K562 (cell line): ENCODE measurements at regions of chr2 and their contacts with region 1.

Region 1: DNA sequence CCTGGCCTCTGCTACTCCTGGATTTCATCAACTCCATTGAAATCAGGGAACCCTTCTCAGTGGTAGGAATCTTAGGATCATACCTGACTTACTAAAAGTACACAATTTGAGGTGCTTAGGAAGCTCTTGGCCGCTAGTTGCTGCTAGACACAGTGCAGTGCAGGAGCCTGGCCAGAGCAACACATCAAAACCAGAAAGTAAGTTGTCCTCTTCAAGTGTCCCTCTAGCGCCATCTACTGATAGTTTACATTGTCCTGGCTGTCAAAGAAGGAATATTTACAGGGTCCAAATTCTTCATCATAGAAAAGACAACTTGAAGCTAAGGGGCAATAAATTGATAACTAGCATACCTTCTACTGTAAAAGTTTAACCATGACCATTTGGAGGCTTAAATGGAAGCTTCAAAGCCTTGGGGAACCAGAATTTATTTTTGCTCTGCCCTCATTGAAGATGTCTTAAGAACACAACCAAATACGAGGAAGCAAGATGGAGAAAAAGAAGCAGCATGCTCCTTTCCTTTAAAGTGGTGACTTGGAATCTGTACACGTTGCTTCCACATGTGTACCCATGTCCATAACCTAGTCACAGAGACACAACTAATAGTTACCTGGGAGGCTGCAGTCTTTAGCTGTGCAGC is 889.1 kb upstream of the GCFC2 start:
- DNase-seq: peak; percentile 38 to 74 (median 45)
- ATAC-seq: peak; percentile 90
- H3K4me3 ChIP-seq: no peak overlapping the region
- H3K27ac ChIP-seq: no peak overlapping the region
- H3K4me1 ChIP-seq: no peaks in the 10 kb centered on the region
- H3K27me3 ChIP-seq: no peaks in the 10 kb centered on the region
- CTCF ChIP-seq: peak; percentile 68 to 84 (median 81)
- EP300 ChIP-seq: no peak
- POLR2A ChIP-seq: no peak
- RAD21 ChIP-seq: peak; percentile 64 to 78

Region 2: GRCh38 chr2:75640621-75641121 is 959.2 kb before region 1 on chr2:
- CTCF ChIA-PET with region 1: no interaction called
- POLR2A ChIA-PET with region 1: no interaction called
- in situ Hi-C with region 1: loop called (anchors 25 kb)
- intact Hi-C with region 1: loop called (anchors 5 kb)
- DNase-seq: peak; percentile 65 to 69 (median 66)
- ATAC-seq: peak; percentile 99
- H3K4me3 ChIP-seq: no peak overlapping the region
- H3K27ac ChIP-seq: no peak overlapping the region
- H3K4me1 ChIP-seq: no peaks in the 10 kb centered on the region
- H3K27me3 ChIP-seq: peaks cover 2 to 5% of the 10 kb centered on the region in 2 experiments; a peak in 2 of 5 replicates
- CTCF ChIP-seq: peak; percentile 94 to 98 (median 97)
- EP300 ChIP-seq: no peak
- POLR2A ChIP-seq: no peak
- RAD21 ChIP-seq: peak; percentile 88 to 94

Region 3: DNA sequence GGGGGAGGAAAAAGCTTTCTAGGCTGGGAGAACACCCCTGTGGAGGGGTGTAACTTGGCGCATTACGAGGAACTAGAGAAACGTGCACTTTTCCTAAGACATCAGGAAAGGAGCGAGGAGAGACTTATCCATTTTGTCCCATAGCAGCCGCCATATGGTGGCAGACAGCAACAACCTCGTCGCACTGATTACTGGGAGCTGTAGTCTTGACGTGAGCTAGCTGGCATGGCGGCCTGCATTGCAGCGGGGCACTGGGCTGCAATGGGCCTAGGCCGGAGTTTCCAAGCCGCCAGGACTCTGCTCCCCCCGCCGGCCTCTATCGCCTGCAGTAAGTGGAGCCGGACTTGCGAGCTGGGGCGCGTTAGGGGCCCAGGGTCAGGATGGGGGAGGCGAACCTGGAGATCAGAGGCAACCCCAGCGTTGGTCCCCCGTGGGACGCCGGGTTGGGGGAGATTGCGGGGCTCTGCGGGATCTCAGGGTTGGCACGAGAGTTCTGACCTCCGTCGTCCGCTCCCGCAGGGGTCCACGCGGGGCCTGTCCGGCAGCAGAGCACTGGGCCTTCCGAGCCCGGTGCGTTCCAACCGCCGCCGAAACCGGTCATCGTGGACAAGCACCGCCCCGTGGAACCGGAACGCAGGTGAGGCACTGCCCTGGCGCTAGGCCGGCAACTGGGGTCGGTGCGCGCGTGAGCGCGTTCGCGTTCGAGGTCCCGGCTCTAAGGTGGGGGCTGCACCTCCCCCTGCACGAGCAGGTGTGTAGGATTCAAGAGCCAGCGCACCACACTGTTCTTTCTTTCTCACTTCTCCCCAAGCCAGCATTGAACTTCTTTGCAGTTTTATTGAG is 953.0 kb before region 1 on chr2 and contains the start of gene MRPL19:
- CTCF ChIA-PET with region 1: no interaction called
- POLR2A ChIA-PET with region 1: no interaction called
- in situ Hi-C with region 1: loop called (anchors 25 kb)
- intact Hi-C with region 1: loop called (anchors 5 kb)
- DNase-seq: peak; percentile 74 to 91 (median 84)
- ATAC-seq: peak; percentile 97
- H3K4me3 ChIP-seq: peak within 1 kb of the TSS; percentile 80
- H3K27ac ChIP-seq: peak within 1 kb of the TSS; percentile 66
- H3K4me1 ChIP-seq: peaks cover 0 to 7% of the 10 kb centered on the region in 2 experiments; a peak in 1 of 5 replicates
- H3K27me3 ChIP-seq: no peaks in the 10 kb centered on the region
- CTCF ChIP-seq: no peak
- EP300 ChIP-seq: no peak
- POLR2A ChIP-seq: peak; percentile 82
- RAD21 ChIP-seq: no peak
- polyA plus RNA-seq, gene MRPL19: 9.7 to 11.8 TPM

Region 4: DNA sequence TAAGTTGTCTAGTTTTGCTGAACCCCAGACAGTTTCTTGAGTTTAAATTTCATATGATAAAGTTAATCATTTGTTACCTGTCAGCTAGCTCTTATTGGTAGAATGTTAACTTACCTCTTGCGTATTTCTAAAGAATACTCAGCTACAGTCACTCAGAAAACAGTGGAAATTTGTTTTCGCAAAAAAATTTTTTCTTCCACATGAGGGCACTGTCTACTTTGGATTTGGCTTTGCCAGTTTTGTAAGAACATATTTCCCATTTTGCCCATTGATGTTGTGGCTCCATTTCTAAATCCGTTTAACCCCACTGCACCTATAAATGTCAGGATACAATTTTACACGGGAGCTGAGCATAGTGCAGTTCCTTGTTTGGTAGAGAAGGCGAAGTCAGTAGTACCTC is 870.0 kb before region 1 on chr2:
- CTCF ChIA-PET with region 1: no interaction called
- POLR2A ChIA-PET with region 1: no interaction called
- in situ Hi-C with region 1: no loop called
- intact Hi-C with region 1: loop called (anchors 1 kb)
- DNase-seq: peak in 1 of 4 experiments; percentile 8
- ATAC-seq: no peak; the same call in 2 of the 3 replicates
- H3K4me3 ChIP-seq: no peak overlapping the region
- H3K27ac ChIP-seq: no peak overlapping the region
- H3K4me1 ChIP-seq: no peaks in the 10 kb centered on the region
- H3K27me3 ChIP-seq: no peaks in the 10 kb centered on the region; a peak in 1 of 5 replicates
- CTCF ChIP-seq: peak; percentile 25 to 59 (median 33); a peak in 4 of 6 replicates
- EP300 ChIP-seq: no peak
- POLR2A ChIP-seq: no peak
- RAD21 ChIP-seq: peak; percentile 36 to 67

Region 5: GRCh38 chr2:75787532-75788132 is 812.2 kb before region 1 on chr2:
- CTCF ChIA-PET with region 1: interaction called, 5 read pairs
- POLR2A ChIA-PET with region 1: no interaction called
- in situ Hi-C with region 1: loop called (anchors 25 kb)
- intact Hi-C with region 1: loop called (anchors 2 kb)
- DNase-seq: peak; percentile 13 to 43 (median 21)
- ATAC-seq: peak; percentile 76
- H3K4me3 ChIP-seq: no peak overlapping the region
- H3K27ac ChIP-seq: no peak overlapping the region
- H3K4me1 ChIP-seq: no peaks in the 10 kb centered on the region
- H3K27me3 ChIP-seq: no peaks in the 10 kb centered on the region
- CTCF ChIP-seq: peak in 2 of 3 experiments; percentile 32 to 66; a peak in 3 of 6 replicates
- EP300 ChIP-seq: no peak
- POLR2A ChIP-seq: no peak
- RAD21 ChIP-seq: peak; percentile 71 to 83

Region 6: GRCh38 chr2:75870654-75871137 is 729.2 kb before region 1 on chr2:
- CTCF ChIA-PET with region 1: no interaction called
- POLR2A ChIA-PET with region 1: no interaction called
- in situ Hi-C with region 1: no loop called
- intact Hi-C with region 1: loop called (anchors 2 kb)
- DNase-seq: no peak
- ATAC-seq: no peak
- H3K4me3 ChIP-seq: no peak overlapping the region
- H3K27ac ChIP-seq: no peak overlapping the region
- H3K4me1 ChIP-seq: no peaks in the 10 kb centered on the region
- H3K27me3 ChIP-seq: no peaks in the 10 kb centered on the region; a peak in 1 of 5 replicates
- CTCF ChIP-seq: no peak
- EP300 ChIP-seq: no peak
- POLR2A ChIP-seq: no peak
- RAD21 ChIP-seq: no peak

Region 7: GRCh38 chr2:76197842-76198448 is 401.9 kb before region 1 on chr2:
- CTCF ChIA-PET with region 1: no interaction called
- POLR2A ChIA-PET with region 1: no interaction called
- in situ Hi-C with region 1: no loop called
- intact Hi-C with region 1: loop called (anchors 2 kb)
- DNase-seq: peak; percentile 11 to 67 (median 27)
- ATAC-seq: peak; percentile 53; the same call in 2 of the 3 replicates
- H3K4me3 ChIP-seq: no peak overlapping the region
- H3K27ac ChIP-seq: no peak overlapping the region
- H3K4me1 ChIP-seq: no peaks in the 10 kb centered on the region; a peak in 2 of 5 replicates
- H3K27me3 ChIP-seq: no peaks in the 10 kb centered on the region
- CTCF ChIP-seq: peak; percentile 24 to 60 (median 57); a peak in 5 of 6 replicates
- EP300 ChIP-seq: no peak
- POLR2A ChIP-seq: no peak
- RAD21 ChIP-seq: peak; percentile 33 to 56

Region 8: DNA sequence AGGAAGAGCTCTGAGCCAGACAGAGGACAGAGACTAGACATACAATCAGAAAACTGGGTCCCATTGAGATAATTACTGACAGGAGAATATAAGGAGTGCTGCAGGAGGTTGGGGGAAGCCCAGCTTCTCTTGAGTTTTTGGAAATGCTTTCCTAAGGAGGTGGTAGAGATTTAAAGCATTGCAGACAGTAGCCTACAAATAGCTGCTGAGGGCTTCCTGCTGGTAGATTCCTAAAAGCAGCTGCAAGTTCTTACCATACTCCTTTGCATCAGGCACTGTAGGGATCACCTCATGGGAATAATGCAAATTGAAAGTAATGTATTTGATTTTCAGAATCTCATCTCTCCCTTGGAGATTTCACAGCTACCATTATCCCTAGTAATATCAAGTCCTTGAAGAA is 13.5 kb after region 1 on chr2:
- CTCF ChIA-PET with region 1: no interaction called
- POLR2A ChIA-PET with region 1: no interaction called
- in situ Hi-C with region 1: no loop called
- intact Hi-C with region 1: no loop called
- DNase-seq: no peak
- ATAC-seq: no peak
- H3K4me3 ChIP-seq: no peak overlapping the region
- H3K27ac ChIP-seq: no peak overlapping the region
- H3K4me1 ChIP-seq: no peaks in the 10 kb centered on the region
- H3K27me3 ChIP-seq: no peaks in the 10 kb centered on the region; a peak in 1 of 5 replicates
- CTCF ChIP-seq: no peak
- EP300 ChIP-seq: no peak
- POLR2A ChIP-seq: no peak
- RAD21 ChIP-seq: no peak